ENCODE measurements at regions of chr11 and their contacts with region 1.

Region 1: GRCh38 chr11:66001942-66002647 is at the starts of genes BANF1 and EIF1AD:
- DNase-seq: peak; percentile 96
- ATAC-seq: peak; percentile 90
- H3K4me3 ChIP-seq: peak within 1 kb of the TSS; percentile 63 to 100
- H3K27ac ChIP-seq: peak within 1 kb of the TSS; percentile 100
- H3K4me1 ChIP-seq: peaks cover 43% of the 10 kb centered on the region
- H3K27me3 ChIP-seq: no peaks in the 10 kb centered on the region
- CTCF ChIP-seq: no peak
- total RNA-seq, gene BANF1: 494 TPM
- total RNA-seq, gene EIF1AD: 64.6 TPM

Region 2: DNA sequence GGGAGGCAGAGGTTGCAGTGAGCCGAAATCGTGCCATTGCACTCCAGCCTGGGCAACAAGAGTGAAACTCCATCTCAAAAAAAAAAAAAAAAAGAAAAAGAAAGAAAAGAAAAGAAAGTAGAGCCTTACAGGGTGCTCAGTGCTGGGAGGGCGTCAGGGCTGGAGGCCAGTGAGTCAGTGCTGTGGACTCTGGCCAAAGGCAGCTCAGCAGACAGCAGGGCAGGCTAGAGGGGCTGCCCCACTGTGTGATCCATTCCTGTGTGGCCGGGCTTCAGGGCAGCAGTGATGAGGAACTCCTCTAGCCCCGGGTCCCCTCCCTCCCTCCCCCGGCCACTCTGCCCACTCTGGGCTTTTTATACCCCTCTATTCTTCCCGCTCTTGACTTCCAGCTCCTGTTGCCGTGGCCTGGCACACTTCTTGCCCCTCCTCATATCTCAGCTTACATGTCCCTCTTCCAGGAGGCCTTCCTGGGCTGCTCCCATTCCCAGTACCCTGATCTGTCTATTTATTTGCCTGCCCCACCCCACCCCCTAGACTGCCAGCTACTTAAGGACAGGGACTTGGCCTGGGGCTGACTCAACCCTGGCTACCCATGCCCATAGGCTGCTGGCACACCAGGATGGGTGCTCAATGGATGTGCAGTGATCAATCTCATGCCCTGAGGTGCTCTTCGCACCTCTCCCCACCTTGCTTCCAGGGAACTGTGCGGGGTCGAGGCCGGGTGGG is 1030.9 kb after region 1 on chr11:
- CTCF ChIA-PET with region 1: no interaction called
- POLR2A ChIA-PET with region 1: interaction called, 10 read pairs
- in situ Hi-C with region 1: no loop called
- intact Hi-C with region 1: no loop called
- DNase-seq: no peak
- ATAC-seq: peak; percentile 85
- H3K4me3 ChIP-seq: no peak overlapping the region
- H3K27ac ChIP-seq: no peak overlapping the region
- H3K4me1 ChIP-seq: peaks cover 8% of the 10 kb centered on the region; the same call in 1 of the 2 replicates
- H3K27me3 ChIP-seq: no peaks in the 10 kb centered on the region
- CTCF ChIP-seq: no peak

Measured in Panc1 (cell line).